ENCODE measurements at regions of chr11 and their contacts with region 1.

Region 1: GRCh38 chr11:10646005-10646404 is 47.5 kb downstream of the IRAG1 start:
- DNase-seq: no peak
- H3K4me3 ChIP-seq: no peak overlapping the region
- H3K27ac ChIP-seq: peak overlapping the region; percentile 41 to 70 (median 64)
- H3K4me1 ChIP-seq: peaks cover 0 to 95% (median 66%) of the 10 kb centered on the region in 4 donors
- H3K27me3 ChIP-seq: no peaks in the 10 kb centered on the region
- CTCF ChIP-seq: no peak
- EP300 ChIP-seq: no peak
- POLR2A ChIP-seq: no peak

Region 2: DNA sequence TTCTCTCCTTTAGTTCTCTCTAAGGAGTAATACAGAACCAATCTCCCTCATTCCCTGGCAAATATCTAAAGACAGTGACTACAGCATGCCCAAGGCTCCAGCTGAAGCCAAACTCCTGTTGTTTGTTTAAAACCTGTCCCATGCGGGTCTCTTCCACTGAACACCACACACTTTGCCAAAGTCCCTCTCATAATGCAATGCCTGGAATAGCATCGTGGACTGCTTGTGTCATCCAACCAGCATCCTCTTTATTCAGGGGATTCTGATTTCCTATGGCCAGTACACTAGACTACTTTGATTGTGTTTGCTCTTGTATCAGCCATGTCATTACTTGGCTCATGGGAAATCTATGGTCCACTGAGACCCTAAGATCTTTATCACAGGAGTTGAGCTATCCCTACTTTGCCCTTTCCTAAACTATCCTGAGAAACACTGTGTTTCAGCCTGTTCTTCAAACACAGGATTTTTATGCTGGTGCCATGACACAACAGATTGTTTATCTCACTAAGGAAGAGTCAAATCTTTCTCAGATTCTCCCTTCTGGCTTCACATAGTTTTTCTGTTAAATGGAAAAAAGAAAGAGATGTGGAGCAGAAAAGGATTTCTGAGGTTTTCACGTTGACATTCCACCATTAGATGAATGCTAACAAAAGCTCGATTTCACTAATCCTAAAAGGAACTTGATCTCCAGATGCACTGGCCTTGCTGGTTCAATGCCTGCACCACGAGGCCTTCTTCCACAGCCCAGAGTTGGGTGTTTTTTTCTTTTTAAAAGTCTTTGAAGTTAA is 63.5 kb after region 1 on chr11:
- intact Hi-C with region 1: loop called (anchors 5 kb)
- DNase-seq: no peak
- H3K4me3 ChIP-seq: no peak overlapping the region
- H3K27ac ChIP-seq: peak overlapping the region in 2 of 4 donors; percentile 7 to 10
- H3K4me1 ChIP-seq: peaks cover 0 to 12% (median 4%) of the 10 kb centered on the region in 4 donors
- H3K27me3 ChIP-seq: no peaks in the 10 kb centered on the region
- CTCF ChIP-seq: no peak
- EP300 ChIP-seq: no peak
- POLR2A ChIP-seq: no peak

Measured in sigmoid colon (tissue), 7 donors.